Colonic mucosa (tissue), 4 donors: ENCODE measurements at regions of chr18 and their contacts with region 1.

Region 1: GRCh38 chr18:67217551-67218166 is 298.9 kb downstream of the DSEL start:
- DNase-seq: peak; percentile 46
- H3K4me3 ChIP-seq: no peak overlapping the region
- H3K27ac ChIP-seq: no peak overlapping the region
- H3K4me1 ChIP-seq: no peaks in the 10 kb centered on the region
- H3K27me3 ChIP-seq: no peaks in the 10 kb centered on the region
- CTCF ChIP-seq: peak; percentile 83

Region 2: GRCh38 chr18:66813138-66813537 is 404.5 kb before region 1 on chr18:
- intact Hi-C with region 1: no loop called
- DNase-seq: no peak
- H3K4me3 ChIP-seq: no peak overlapping the region
- H3K27ac ChIP-seq: no peak overlapping the region
- H3K4me1 ChIP-seq: no peaks in the 10 kb centered on the region
- H3K27me3 ChIP-seq: no peaks in the 10 kb centered on the region
- CTCF ChIP-seq: no peak

Region 3: GRCh38 chr18:67496469-67496868 is 278.8 kb after region 1 on chr18:
- intact Hi-C with region 1: no loop called
- DNase-seq: no peak
- H3K4me3 ChIP-seq: no peak overlapping the region
- H3K27ac ChIP-seq: no peak overlapping the region
- H3K4me1 ChIP-seq: no peaks in the 10 kb centered on the region
- H3K27me3 ChIP-seq: no peaks in the 10 kb centered on the region
- CTCF ChIP-seq: no peak

Region 4: GRCh38 chr18:68660354-68661183 is 1442.9 kb after region 1 on chr18:
- intact Hi-C with region 1: loop called (anchors 5 kb)
- DNase-seq: no peak
- H3K4me3 ChIP-seq: no peak overlapping the region
- H3K27ac ChIP-seq: no peak overlapping the region
- H3K4me1 ChIP-seq: no peaks in the 10 kb centered on the region
- H3K27me3 ChIP-seq: no peaks in the 10 kb centered on the region
- CTCF ChIP-seq: peak; percentile 45

Region 5: DNA sequence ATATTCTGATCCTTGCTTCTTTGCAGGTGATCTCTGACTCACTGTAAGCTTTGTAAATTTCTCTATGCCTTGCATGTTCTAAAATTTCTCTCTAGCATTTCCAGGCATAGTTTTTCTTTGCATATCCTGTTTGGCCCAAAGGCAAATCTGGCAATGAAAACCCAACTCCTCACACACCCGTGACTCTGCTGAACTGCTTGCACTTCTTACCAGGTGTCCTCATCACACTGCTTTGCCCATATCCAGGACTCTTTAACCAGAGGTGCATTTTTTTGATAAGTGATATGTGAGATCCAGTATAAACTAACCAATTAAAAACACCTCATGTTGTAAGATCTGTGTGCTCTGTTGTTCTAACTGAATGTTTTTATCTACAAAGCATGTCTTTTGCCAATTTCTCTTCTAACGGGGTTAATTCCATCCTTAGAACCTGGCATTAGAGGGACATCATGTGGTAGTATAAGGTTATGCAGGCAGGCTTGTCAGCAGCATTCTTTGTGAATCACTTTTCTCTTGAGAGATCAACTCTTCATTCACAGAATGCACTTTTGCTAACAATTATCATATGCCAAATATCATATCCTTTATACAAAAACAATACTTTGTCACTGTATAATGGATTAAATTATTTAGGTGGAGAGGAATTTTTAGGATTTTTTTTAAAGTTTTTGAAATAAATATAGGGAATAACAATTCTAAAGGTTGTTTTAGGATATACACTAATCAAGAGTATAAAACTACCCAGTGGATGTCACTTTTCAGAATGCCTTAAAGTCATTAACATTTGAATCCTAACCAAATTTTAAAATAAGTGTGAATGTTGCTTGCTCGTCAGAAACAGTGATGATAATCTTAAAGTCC is 1518.1 kb after region 1 on chr18:
- intact Hi-C with region 1: loop called (anchors 5 kb)
- DNase-seq: no peak
- H3K4me3 ChIP-seq: no peak overlapping the region
- H3K27ac ChIP-seq: no peak overlapping the region
- H3K4me1 ChIP-seq: no peaks in the 10 kb centered on the region
- H3K27me3 ChIP-seq: no peaks in the 10 kb centered on the region
- CTCF ChIP-seq: peak; percentile 57